B cell (primary cell): ENCODE measurements at regions of chr1 and their contacts with region 1.

Region 1: DNA sequence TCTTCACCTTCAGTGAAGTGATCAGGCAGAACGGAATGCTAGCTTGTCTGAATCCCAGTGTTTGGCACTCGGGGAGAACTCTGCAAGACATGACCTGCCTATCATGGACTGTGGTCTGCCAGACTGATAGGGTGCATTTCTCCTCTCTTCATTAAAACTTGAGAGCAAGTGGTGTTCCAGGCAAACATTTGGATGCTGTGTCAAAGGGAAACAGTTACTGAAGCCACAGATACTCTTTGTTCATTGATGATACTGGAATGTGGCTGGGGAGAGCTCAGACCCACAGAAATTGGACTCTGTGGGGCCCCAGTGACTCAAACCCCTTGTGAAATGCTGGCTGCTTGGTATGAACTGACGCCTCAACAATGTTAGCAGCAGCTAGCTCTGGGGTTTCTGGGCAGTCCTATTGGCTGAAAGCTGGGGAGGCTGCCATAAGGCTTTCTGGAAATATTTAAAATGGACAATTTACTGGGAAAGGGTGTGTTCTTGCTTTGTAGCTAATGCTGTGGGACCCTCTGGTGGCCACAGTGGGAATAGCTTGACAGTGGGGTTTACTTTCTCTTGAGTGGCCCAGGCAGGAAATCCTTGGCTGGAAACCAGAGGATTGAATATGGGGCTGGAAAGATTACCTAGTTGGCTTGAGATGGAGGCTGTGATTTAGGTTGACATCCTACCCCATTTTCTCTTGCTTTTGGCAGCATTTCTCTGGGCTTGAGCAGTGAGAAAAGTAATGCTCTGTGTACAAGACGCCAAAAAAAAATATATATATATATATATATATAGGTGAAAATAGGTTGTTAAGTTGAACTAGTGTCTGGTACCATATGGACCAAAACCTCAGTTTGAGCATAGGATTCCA is 8.0 kb upstream of the S100A10 start:
- DNase-seq: peak; percentile 80
- ATAC-seq: peak; percentile 63
- H3K4me3 ChIP-seq: no peak overlapping the region
- H3K4me3 Mint-ChIP-seq: no peak overlapping the region
- H3K27ac ChIP-seq: no peak overlapping the region
- H3K27ac Mint-ChIP-seq: no peak overlapping the region
- H3K4me1 ChIP-seq: peaks cover 0 to under 1% of the 10 kb centered on the region in 2 donors
- H3K4me1 Mint-ChIP-seq: no peaks in the 10 kb centered on the region
- H3K27me3 ChIP-seq: peaks cover 0 to 31% (median 2%) of the 10 kb centered on the region in 4 experiments
- H3K27me3 Mint-ChIP-seq: peaks cover 38% of the 10 kb centered on the region
- CTCF ChIP-seq: peak; percentile 97

Region 2: DNA sequence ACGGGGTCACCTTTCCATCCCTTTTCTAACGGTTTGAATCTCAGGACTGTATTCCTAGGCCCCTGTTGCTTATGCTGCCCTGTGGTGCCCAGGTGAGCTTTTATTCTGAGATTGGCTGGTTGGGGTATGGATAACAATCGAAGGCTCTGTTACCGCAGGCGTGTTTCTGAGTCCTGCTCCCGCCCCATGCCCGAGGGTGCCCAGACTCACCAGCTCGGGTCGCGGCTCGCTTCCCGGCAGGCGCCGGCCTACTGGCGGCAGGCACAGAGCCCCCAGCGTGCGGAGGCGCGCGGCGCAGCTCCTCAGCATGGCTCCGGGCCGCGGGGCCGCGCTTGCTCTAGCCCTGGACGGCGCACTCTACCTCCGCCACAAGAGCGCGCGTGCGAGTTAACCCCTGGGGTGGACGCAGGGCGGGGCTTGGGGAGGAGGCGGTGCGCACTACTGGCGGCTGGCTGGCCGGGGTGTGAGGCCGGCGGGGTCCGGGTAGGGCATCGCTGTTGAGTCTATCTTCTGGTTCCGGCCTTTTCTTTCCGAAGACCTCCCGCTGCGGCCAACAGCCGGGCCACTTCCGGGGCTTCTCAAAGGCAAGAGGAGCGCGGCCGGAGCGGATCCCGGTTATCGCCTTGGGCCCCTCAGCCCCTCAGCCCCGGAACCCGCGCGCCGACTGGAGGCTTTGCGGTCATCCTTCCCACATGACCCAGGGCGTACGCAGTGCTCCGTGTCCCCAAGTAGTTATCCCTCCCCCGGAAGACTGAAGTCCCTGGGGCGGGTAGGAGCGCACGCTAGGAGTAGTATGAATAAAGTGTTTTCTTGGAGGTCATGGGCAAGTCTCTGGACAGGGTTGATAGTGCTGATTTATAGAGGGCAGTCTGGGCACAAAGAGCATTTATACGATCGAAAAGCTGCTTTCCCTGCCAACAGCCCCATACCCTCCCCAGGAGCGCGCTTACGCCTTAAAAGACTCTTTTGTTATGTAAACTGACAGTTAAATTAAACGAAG is 92.2 kb before region 1 on chr1 and contains the start of gene THEM4:
- CTCF ChIA-PET with region 1: interaction called, 25 read pairs
- POLR2A ChIA-PET with region 1: no interaction called
- intact Hi-C with region 1: no loop called
- DNase-seq: peak; percentile 92
- ATAC-seq: peak; percentile 99
- H3K4me3 ChIP-seq: peak within 1 kb of the TSS; percentile 8 to 82 (median 70)
- H3K4me3 Mint-ChIP-seq: peak within 1 kb of the TSS; percentile 92
- H3K27ac ChIP-seq: peak within 1 kb of the TSS; percentile 54 to 70
- H3K27ac Mint-ChIP-seq: peak within 1 kb of the TSS; percentile 86
- H3K4me1 ChIP-seq: peaks cover 7 to 17% of the 10 kb centered on the region in 2 donors
- H3K4me1 Mint-ChIP-seq: peaks cover 11% of the 10 kb centered on the region
- H3K27me3 ChIP-seq: no peaks in the 10 kb centered on the region
- H3K27me3 Mint-ChIP-seq: no peaks in the 10 kb centered on the region
- CTCF ChIP-seq: peak; percentile 20
- total RNA-seq, gene THEM4: 16.1 and 19.8 TPM in 2 replicates

Region 3: GRCh38 chr1:151939779-151940178 is 61.8 kb before region 1 on chr1:
- CTCF ChIA-PET with region 1: interaction called, 341 read pairs
- POLR2A ChIA-PET with region 1: interaction called, 3 read pairs
- intact Hi-C with region 1: loop called (anchors 1 kb)
- DNase-seq: no peak
- ATAC-seq: no peak
- H3K4me3 ChIP-seq: no peak overlapping the region
- H3K4me3 Mint-ChIP-seq: no peak overlapping the region
- H3K27ac ChIP-seq: no peak overlapping the region
- H3K27ac Mint-ChIP-seq: no peak overlapping the region
- H3K4me1 ChIP-seq: peaks cover 10 to 21% of the 10 kb centered on the region in 2 donors
- H3K4me1 Mint-ChIP-seq: peaks cover 21% of the 10 kb centered on the region
- H3K27me3 ChIP-seq: peaks cover 0 to 3% (median 0%) of the 10 kb centered on the region in 4 experiments
- H3K27me3 Mint-ChIP-seq: peaks cover 9% of the 10 kb centered on the region
- CTCF ChIP-seq: no peak

Region 4: DNA sequence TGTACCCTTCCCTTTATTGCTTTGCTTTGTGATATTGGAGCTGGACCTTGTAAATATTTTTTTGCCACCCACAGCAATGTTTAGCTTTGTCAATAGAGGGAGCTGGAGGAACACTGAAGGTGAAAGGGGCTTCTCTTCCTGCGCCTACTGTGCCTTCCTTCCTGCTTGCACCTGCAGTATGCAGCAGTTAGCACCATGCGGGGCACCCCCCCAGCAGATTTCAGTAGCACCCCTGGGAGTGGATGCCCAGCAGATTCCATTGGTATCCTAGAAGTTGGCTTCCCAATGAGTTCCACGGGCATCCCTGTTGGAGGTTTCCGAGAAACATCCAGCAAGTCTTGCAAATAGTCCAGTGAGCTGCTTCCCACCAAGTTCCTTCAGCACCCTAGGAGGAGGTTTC is 33.6 kb before region 1 on chr1:
- CTCF ChIA-PET with region 1: interaction called, 307 read pairs
- POLR2A ChIA-PET with region 1: no interaction called
- intact Hi-C with region 1: loop called (anchors 1 kb)
- DNase-seq: peak; percentile 76
- ATAC-seq: peak; percentile 78
- H3K4me3 ChIP-seq: no peak overlapping the region
- H3K4me3 Mint-ChIP-seq: no peak overlapping the region
- H3K27ac ChIP-seq: no peak overlapping the region
- H3K27ac Mint-ChIP-seq: no peak overlapping the region
- H3K4me1 ChIP-seq: peaks cover 0 to 7% of the 10 kb centered on the region in 2 donors
- H3K4me1 Mint-ChIP-seq: peaks cover 7% of the 10 kb centered on the region
- H3K27me3 ChIP-seq: peaks cover 0 to 7% (median 4%) of the 10 kb centered on the region in 4 experiments
- H3K27me3 Mint-ChIP-seq: peaks cover 18% of the 10 kb centered on the region
- CTCF ChIP-seq: peak; percentile 79

Region 5: DNA sequence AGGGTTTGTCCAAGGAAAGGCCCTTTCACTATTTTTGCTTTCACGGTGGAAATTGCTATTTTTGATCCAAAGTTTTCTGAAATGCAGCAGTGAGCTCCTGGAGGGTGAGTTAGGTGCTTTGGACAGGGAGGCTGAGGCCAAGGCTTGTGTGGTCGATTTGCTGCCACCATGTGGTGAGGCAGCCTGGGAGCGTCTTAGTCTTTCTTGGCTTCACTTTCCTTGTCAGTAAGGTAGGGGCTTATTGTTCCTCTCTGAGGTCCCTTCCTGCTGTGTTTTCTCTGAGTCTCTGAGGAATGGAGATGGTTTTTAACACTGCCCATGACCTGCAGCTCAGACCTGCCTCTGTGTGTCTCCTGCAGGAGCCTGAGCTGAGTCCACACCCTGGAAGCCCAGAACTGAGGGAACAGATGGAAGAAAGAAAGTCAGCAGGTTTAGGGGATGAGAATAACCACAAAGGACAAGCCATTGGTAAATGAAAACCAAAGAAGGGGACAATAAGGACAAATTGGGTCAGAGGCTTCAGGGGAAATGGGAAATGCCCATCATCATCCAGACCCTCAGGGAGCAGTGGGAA is 12.1 kb after region 1 on chr1:
- CTCF ChIA-PET with region 1: interaction called, 54 read pairs
- POLR2A ChIA-PET with region 1: no interaction called
- intact Hi-C with region 1: no loop called
- DNase-seq: peak; percentile 50
- ATAC-seq: no peak
- H3K4me3 ChIP-seq: no peak overlapping the region
- H3K4me3 Mint-ChIP-seq: no peak overlapping the region
- H3K27ac ChIP-seq: no peak overlapping the region
- H3K27ac Mint-ChIP-seq: no peak overlapping the region
- H3K4me1 ChIP-seq: no peaks in the 10 kb centered on the region
- H3K4me1 Mint-ChIP-seq: no peaks in the 10 kb centered on the region
- H3K27me3 ChIP-seq: peaks cover 0 to 27% (median 4%) of the 10 kb centered on the region in 4 experiments
- H3K27me3 Mint-ChIP-seq: peaks cover 51% of the 10 kb centered on the region
- CTCF ChIP-seq: peak; percentile 38